Head of caudate nucleus (tissue), 42 donors: ENCODE measurements at regions of chr7 and their contacts with region 1.

Region 1: GRCh38 chr7:116588641-116589594 is 64.1 kb downstream of the CAV1 start:
- DNase-seq: peak in 4 of 42 donors; percentile 16 to 49 (median 20)

Region 2: GRCh38 chr7:116258734-116259133 is 330.2 kb before region 1 on chr7:
- intact Hi-C with region 1: loop called (anchors 2 kb)
- DNase-seq: peak in 26 of 42 donors; percentile 6 to 81 (median 48)